Right ventricle myocardium superior (tissue), 1 donor: ENCODE measurements at regions of chr10 and their contacts with region 1.

Region 1: GRCh38 chr10:100998991-100999741 is 442 bp upstream of the LZTS2 start:
- DNase-seq: peak; percentile 91
- ATAC-seq: peak; percentile 81

Region 2: DNA sequence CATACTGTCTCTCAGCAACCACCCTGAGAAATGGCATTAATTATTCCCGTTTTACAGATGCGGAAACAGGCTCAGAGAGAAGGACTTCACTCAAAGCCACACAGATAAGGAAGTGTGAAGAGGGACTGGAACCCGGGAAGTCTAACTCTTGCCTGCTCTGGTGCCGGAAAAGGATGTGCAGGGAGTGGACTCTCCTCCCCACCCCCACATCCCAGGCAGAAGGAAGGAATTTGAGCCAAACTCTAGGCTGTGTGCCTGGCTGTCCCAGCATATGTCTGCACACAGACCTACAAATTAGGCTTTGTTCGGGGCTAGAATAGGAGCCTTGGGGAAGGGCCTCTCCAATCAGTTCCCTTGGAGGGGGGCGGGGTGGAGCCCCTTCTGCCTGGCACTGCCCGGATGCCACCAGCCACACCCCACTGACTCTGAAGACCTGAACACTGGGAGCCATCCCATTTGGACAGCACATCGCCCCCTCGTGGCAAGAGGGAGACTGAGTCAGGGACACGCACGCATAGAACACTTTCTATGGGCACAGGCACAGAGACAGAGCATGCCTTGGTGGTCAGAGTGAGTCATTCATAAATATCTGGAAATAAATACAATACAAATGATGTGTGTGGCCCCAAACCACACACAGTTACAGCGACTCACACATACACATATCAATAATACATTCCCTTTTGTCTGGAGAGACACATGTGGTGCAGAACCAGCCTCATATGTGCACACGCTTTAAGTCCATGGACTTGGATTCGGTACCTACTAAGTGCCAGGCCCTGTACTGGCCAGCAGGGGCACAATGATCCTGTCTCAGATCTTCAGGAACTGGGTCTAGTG is 13.6 kb after region 1 on chr10:
- intact Hi-C with region 1: loop called (anchors 2 kb)
- DNase-seq: peak; percentile 93
- ATAC-seq: peak; percentile 92